ENCODE measurements at regions of chr5 and their contacts with region 1.

Region 1: DNA sequence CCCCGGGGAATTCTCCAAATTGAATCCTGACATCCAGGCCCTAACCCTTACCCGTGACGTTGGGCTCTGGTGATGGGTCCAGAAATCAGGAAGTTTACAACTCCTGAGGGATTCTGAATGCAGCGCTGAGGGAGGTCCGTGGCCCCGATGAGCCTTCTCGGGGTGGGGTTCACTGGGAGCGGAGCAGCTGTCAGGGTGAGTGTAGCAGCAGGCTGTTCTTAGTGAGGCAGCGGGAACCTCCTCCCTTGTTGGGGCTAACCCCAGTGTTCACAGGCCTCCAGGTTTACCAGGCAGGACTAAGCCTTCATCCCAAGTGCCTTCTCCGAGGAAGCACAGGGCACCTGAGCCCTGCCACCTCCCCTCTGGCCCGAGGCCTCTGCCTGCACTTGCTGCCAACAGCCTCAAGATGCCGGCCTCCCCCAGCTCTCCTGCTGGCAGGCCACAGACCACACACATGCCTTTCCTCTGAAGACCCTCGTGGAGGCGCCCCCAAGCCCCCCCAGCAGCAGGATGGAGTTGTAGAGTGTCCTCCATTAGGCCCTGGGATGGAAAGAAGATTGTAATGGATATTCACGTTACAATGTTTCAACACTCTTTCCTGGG is 7.3 kb upstream of the ADAMTS16 start:
- DNase-seq: no peak
- ATAC-seq: no peak
- H3K4me3 ChIP-seq: no peak overlapping the region
- H3K27ac ChIP-seq: no peak overlapping the region
- H3K4me1 ChIP-seq: no peaks in the 10 kb centered on the region
- H3K27me3 ChIP-seq: no peaks in the 10 kb centered on the region
- CTCF ChIP-seq: no peak
- POLR2A ChIP-seq: no peak

Region 2: GRCh38 chr5:5252111-5252510 is 119.3 kb after region 1 on chr5:
- in situ Hi-C with region 1: no loop called
- intact Hi-C with region 1: no loop called
- DNase-seq: no peak
- ATAC-seq: no peak
- H3K4me3 ChIP-seq: no peak overlapping the region
- H3K27ac ChIP-seq: no peak overlapping the region
- H3K4me1 ChIP-seq: no peaks in the 10 kb centered on the region
- H3K27me3 ChIP-seq: no peaks in the 10 kb centered on the region
- CTCF ChIP-seq: no peak
- POLR2A ChIP-seq: no peak

Region 3: DNA sequence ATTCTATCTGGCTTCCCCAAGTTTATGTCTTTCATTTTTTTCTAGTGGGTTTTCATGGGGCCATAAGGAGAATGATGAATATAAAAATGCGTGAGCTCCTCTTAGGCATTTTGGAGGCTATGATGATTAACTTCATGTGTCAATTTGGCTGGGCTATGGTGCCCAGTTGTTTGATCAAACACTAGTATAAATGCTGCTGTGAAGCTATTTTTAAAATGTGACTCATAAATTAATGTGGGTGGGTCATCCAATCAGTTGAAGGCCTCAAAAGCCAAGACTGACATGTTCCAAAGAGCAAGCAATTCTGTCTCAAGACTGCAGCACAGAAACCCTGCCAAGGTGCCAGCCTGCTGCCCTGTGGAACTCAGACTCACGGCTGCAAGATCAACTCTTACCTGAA is 265.3 kb after region 1 on chr5:
- in situ Hi-C with region 1: loop called in 1 of 4 experiments (anchors 5 kb)
- intact Hi-C with region 1: no loop called
- DNase-seq: no peak
- ATAC-seq: no peak
- H3K4me3 ChIP-seq: no peak overlapping the region
- H3K27ac ChIP-seq: no peak overlapping the region
- H3K4me1 ChIP-seq: no peaks in the 10 kb centered on the region
- H3K27me3 ChIP-seq: no peaks in the 10 kb centered on the region
- CTCF ChIP-seq: no peak
- POLR2A ChIP-seq: no peak

Region 4: GRCh38 chr5:5983261-5983980 is 850.6 kb after region 1 on chr5:
- in situ Hi-C with region 1: no loop called
- intact Hi-C with region 1: no loop called
- DNase-seq: no peak
- ATAC-seq: no peak
- H3K4me3 ChIP-seq: no peak overlapping the region
- H3K27ac ChIP-seq: no peak overlapping the region
- H3K4me1 ChIP-seq: no peaks in the 10 kb centered on the region
- H3K27me3 ChIP-seq: no peaks in the 10 kb centered on the region
- CTCF ChIP-seq: no peak
- POLR2A ChIP-seq: no peak